ENCODE measurements at regions of chr9 and their contacts with region 1.

Region 1: GRCh38 chr9:120842690-120843499 is at the start of gene PSMD5:
- DNase-seq: peak; percentile 100
- ATAC-seq: peak; percentile 98
- H3K4me3 Mint-ChIP-seq: peak within 1 kb of the TSS; percentile 98
- H3K27ac Mint-ChIP-seq: peak within 1 kb of the TSS; percentile 98
- H3K4me1 Mint-ChIP-seq: peaks cover 74% of the 10 kb centered on the region
- H3K27me3 Mint-ChIP-seq: no peaks in the 10 kb centered on the region
- total RNA-seq, gene PSMD5: 47.9 to 50.7 TPM

Region 2: GRCh38 chr9:120792898-120793765 is 49.8 kb before region 1 on chr9 and contains the start of gene FBXW2:
- CTCF ChIA-PET with region 1: no interaction called
- POLR2A ChIA-PET with region 1: interaction called, 27 read pairs
- DNase-seq: peak; percentile 91
- ATAC-seq: peak; percentile 91
- H3K4me3 Mint-ChIP-seq: peak within 1 kb of the TSS; percentile 82
- H3K27ac Mint-ChIP-seq: peak within 1 kb of the TSS; percentile 88
- H3K4me1 Mint-ChIP-seq: peaks cover 54% of the 10 kb centered on the region
- H3K27me3 Mint-ChIP-seq: no peaks in the 10 kb centered on the region
- total RNA-seq, gene FBXW2: 90.0 to 90.9 TPM

Region 3: GRCh38 chr9:120832807-120833206 is 10.1 kb before region 1 on chr9:
- CTCF ChIA-PET with region 1: interaction called, 3 read pairs
- POLR2A ChIA-PET with region 1: interaction called, 14 read pairs
- DNase-seq: no peak
- ATAC-seq: no peak
- H3K4me3 Mint-ChIP-seq: no peak overlapping the region
- H3K27ac Mint-ChIP-seq: no peak overlapping the region
- H3K4me1 Mint-ChIP-seq: peaks cover 7% of the 10 kb centered on the region
- H3K27me3 Mint-ChIP-seq: no peaks in the 10 kb centered on the region

Region 4: DNA sequence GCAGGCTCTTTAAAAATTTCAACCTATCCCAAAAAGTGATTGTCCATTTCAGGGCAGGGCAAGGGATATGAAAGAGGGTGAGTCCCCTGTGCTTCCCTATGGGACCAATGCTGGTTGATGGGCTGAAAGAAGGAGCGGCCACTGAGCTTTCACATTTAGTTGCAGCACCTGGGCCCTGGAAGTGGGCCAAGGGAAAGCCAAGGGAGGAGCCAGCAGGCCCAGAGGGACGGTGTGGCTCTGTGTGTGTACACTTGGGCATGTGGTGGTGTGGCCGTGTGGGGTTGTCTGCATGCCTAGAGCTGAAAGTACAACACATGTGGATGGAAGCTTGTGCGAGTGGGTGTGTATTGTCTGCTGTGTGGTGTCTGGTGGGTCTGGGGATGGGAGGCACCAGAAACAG is 13.8 kb after region 1 on chr9:
- CTCF ChIA-PET with region 1: no interaction called
- POLR2A ChIA-PET with region 1: interaction called, 19 read pairs
- DNase-seq: no peak
- ATAC-seq: no peak
- H3K4me3 Mint-ChIP-seq: no peak overlapping the region
- H3K27ac Mint-ChIP-seq: peak overlapping the region; percentile 20
- H3K4me1 Mint-ChIP-seq: no peaks in the 10 kb centered on the region
- H3K27me3 Mint-ChIP-seq: no peaks in the 10 kb centered on the region

Region 5: GRCh38 chr9:121133149-121133816 is 290.4 kb after region 1 on chr9:
- CTCF ChIA-PET with region 1: no interaction called
- POLR2A ChIA-PET with region 1: no interaction called
- DNase-seq: peak; percentile 90
- ATAC-seq: peak; percentile 99
- H3K4me3 Mint-ChIP-seq: peak overlapping the region; percentile 39
- H3K27ac Mint-ChIP-seq: peak overlapping the region; percentile 67
- H3K4me1 Mint-ChIP-seq: peaks cover 52% of the 10 kb centered on the region
- H3K27me3 Mint-ChIP-seq: no peaks in the 10 kb centered on the region

Measured in activated CD8-positive, alpha-beta T cell treated with anti-CD3 and anti-CD28 coated beads, Interleukin-2, amount 10 ng/mL, durations not matched to agents 7 days and 5 days (primary cell).